ENCODE measurements at regions of chr2 and their contacts with region 1.

Region 1: GRCh38 chr2:98269274-98269673 is 77.0 kb upstream of the CNGA3 start:
- DNase-seq: no peak
- ATAC-seq: peak; percentile 91
- H3K4me3 ChIP-seq: no peak overlapping the region
- H3K27ac ChIP-seq: no peak overlapping the region
- H3K4me1 ChIP-seq: no peaks in the 10 kb centered on the region
- H3K27me3 ChIP-seq: no peaks in the 10 kb centered on the region; a peak in 1 of 4 replicates
- CTCF ChIP-seq: peak; percentile 54 to 76 (median 66)
- EP300 ChIP-seq: no peak
- POLR2A ChIP-seq: no peak
- RAD21 ChIP-seq: peak; percentile 78

Region 2: DNA sequence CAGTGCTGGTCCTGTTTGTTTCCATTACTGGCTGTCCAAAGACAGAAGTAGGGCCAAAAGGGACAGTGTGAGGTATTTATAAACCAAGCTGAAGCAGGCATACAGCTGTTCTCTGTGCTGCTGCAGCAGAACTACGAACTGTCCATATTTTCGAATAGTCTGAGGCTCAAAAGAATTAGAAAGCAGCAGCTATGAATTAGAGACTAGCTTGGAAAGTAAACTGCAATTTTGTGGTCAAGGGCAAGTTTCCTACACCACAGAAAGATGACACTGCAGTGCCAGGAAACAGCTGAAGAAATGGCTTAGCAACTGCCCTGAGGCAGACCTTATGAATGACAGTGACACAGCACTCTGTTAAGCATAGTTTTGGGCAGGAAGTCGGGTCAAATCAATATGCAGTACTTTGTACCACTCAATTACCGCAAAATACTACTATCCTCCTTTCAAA is 398.9 kb before region 1 on chr2:
- CTCF ChIA-PET with region 1: interaction called, 7 read pairs
- POLR2A ChIA-PET with region 1: no interaction called
- RAD21 ChIA-PET with region 1: interaction called, 16 read pairs
- SMC1A ChIA-PET with region 1: no interaction called
- in situ Hi-C with region 1: no loop called
- intact Hi-C with region 1: no loop called
- DNase-seq: peak; percentile 87
- ATAC-seq: peak; percentile 100
- H3K4me3 ChIP-seq: no peak overlapping the region
- H3K27ac ChIP-seq: peak overlapping the region; percentile 33; the same call in 1 of the 2 replicates
- H3K4me1 ChIP-seq: peaks cover 20% of the 10 kb centered on the region
- H3K27me3 ChIP-seq: no peaks in the 10 kb centered on the region
- CTCF ChIP-seq: peak in 2 of 3 experiments; percentile 13 to 66; a peak in 3 of 6 replicates
- EP300 ChIP-seq: peak in 1 of 2 experiments; percentile 41; a peak in 1 of 4 replicates
- POLR2A ChIP-seq: no peak
- RAD21 ChIP-seq: peak; percentile 64

Region 3: DNA sequence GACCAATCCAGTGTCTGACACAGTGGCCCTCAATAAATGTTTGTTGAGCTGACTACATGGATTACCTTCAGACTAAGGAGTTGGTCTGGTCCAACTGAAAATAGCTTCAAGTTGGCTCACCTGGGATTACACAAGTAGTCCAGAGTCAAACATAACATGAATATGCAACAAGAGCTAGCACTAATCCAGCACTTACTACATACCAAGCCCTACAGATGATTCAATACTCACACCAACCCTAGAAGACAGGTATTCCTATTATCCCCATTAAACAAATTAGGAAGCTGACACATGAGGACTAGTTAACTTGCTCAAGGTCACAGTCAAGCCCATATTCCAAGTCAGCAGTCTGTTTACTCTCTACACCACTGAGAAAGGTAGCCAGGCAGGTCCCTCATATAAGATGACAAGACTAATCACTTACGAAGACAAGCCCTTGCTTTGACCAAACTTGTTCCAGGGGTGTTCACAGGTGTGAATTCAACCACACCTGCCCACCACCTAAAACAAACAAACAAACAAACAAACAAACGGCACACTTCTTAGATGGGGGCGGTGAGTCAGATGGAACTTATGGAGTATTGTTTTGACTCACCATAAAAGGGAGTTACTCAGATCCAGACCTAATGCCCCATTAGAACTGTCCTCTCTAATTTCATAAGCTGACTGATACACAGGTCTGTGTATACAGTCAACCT is 302.6 kb before region 1 on chr2:
- CTCF ChIA-PET with region 1: no interaction called
- POLR2A ChIA-PET with region 1: no interaction called
- RAD21 ChIA-PET with region 1: no interaction called
- SMC1A ChIA-PET with region 1: no interaction called
- in situ Hi-C with region 1: no loop called
- intact Hi-C with region 1: no loop called
- DNase-seq: no peak
- ATAC-seq: peak; percentile 74
- H3K4me3 ChIP-seq: no peak overlapping the region
- H3K27ac ChIP-seq: no peak overlapping the region
- H3K4me1 ChIP-seq: peaks cover 33% of the 10 kb centered on the region
- H3K27me3 ChIP-seq: no peaks in the 10 kb centered on the region
- CTCF ChIP-seq: no peak
- EP300 ChIP-seq: peak; percentile 63 to 75; a peak in 2 of 4 replicates
- POLR2A ChIP-seq: no peak
- RAD21 ChIP-seq: no peak

Region 4: DNA sequence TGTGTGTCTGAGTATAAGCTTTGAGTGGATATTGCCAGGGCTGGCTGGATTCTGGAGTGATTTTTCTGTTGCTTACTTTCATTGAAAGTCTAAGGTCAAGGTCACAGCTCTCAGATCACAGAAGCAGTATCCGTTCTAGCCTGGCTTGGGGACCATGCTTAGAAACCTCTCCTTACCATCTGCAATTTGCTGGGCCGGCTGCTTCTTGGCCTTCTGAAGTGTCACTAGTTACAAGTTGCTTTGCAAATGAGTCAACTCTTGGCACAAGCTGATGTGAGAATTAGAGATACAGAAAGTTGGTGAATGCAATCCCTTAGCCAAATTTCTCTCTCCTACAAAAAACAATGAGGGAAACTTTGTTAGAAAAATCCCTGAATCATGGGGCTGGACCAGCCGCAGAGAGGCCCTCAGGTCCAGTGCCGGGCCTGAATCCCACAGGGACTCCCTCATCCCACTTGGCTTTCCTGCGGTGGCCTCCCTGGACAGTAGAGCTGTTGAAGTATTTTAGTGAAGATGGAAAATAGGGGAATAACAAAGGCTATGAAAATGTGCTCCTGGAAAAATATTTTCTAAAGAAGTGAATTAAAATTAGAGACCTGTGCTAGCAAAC is 15.7 kb before region 1 on chr2:
- CTCF ChIA-PET with region 1: interaction called, 17 read pairs
- POLR2A ChIA-PET with region 1: no interaction called
- RAD21 ChIA-PET with region 1: no interaction called
- SMC1A ChIA-PET with region 1: interaction called, 4 read pairs
- in situ Hi-C with region 1: no loop called
- intact Hi-C with region 1: no loop called
- DNase-seq: no peak
- ATAC-seq: no peak
- H3K4me3 ChIP-seq: no peak overlapping the region
- H3K27ac ChIP-seq: no peak overlapping the region
- H3K4me1 ChIP-seq: no peaks in the 10 kb centered on the region
- H3K27me3 ChIP-seq: no peaks in the 10 kb centered on the region
- CTCF ChIP-seq: no peak
- EP300 ChIP-seq: no peak
- POLR2A ChIP-seq: no peak
- RAD21 ChIP-seq: no peak

Region 5: GRCh38 chr2:98280376-98281102 is 11.3 kb after region 1 on chr2:
- CTCF ChIA-PET with region 1: interaction called, 11 read pairs
- POLR2A ChIA-PET with region 1: no interaction called
- RAD21 ChIA-PET with region 1: no interaction called
- SMC1A ChIA-PET with region 1: interaction called, 12 read pairs
- in situ Hi-C with region 1: no loop called
- intact Hi-C with region 1: no loop called
- DNase-seq: no peak
- ATAC-seq: peak; percentile 70
- H3K4me3 ChIP-seq: no peak overlapping the region
- H3K27ac ChIP-seq: no peak overlapping the region
- H3K4me1 ChIP-seq: no peaks in the 10 kb centered on the region
- H3K27me3 ChIP-seq: no peaks in the 10 kb centered on the region
- CTCF ChIP-seq: no peak
- EP300 ChIP-seq: no peak; a peak in 1 of 4 replicates
- POLR2A ChIP-seq: no peak
- RAD21 ChIP-seq: no peak

Region 6: DNA sequence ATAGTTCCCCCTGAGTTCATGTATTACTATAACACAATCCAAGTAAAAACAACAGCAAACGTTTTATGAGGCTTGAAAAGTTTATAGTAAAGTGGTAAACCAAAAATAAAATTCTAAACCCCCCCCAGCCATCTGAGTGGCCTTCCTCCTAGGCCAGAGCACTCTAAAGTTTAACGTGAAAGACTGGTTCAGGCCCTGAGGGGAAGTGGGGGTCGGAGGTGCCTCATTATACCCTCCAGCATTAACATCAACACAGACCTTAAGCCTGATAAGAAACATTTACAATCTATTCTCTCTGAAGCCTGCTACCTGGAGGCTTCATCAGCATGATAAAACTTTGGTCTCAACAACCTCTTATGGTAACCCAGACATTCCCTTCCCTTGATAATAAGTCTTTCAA is 47.9 kb after region 1 on chr2:
- CTCF ChIA-PET with region 1: no interaction called
- POLR2A ChIA-PET with region 1: no interaction called
- RAD21 ChIA-PET with region 1: no interaction called
- SMC1A ChIA-PET with region 1: no interaction called
- in situ Hi-C with region 1: no loop called
- intact Hi-C with region 1: no loop called
- DNase-seq: no peak
- ATAC-seq: no peak
- H3K4me3 ChIP-seq: no peak overlapping the region
- H3K27ac ChIP-seq: no peak overlapping the region
- H3K4me1 ChIP-seq: no peaks in the 10 kb centered on the region
- H3K27me3 ChIP-seq: no peaks in the 10 kb centered on the region
- CTCF ChIP-seq: no peak
- EP300 ChIP-seq: no peak
- POLR2A ChIP-seq: no peak
- RAD21 ChIP-seq: no peak

Measured in GM12878 (cell line).